Left cardiac atrium (tissue), 4 donors: ENCODE measurements at regions of chr12 and their contacts with region 1.

Region 1: GRCh38 chr12:25583545-25583944 is 30.5 kb upstream of the LMNTD1 start:
- DNase-seq: peak; percentile 41
- ATAC-seq: peak; percentile 92 to 96

Region 2: DNA sequence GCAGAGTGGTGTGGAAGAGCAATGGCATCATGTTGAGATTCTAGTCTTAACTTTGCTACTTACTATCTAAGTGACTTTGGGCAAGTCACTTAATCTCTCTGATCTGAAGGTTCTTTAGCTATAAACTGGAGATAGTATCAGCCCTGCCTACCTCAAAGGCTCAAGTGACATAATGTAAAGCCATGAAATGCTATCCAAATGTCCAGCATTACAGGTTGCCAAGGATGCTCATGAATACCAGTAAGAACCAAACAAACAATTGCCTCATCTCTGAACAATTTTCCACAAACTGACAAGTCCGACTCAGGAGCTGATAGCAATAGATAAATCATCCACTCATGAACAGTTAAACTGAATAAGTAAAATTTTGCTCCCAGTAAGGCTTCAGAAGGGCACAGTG is 82.0 kb before region 1 on chr12:
- intact Hi-C with region 1: no loop called
- DNase-seq: no peak
- ATAC-seq: no peak

Region 3: DNA sequence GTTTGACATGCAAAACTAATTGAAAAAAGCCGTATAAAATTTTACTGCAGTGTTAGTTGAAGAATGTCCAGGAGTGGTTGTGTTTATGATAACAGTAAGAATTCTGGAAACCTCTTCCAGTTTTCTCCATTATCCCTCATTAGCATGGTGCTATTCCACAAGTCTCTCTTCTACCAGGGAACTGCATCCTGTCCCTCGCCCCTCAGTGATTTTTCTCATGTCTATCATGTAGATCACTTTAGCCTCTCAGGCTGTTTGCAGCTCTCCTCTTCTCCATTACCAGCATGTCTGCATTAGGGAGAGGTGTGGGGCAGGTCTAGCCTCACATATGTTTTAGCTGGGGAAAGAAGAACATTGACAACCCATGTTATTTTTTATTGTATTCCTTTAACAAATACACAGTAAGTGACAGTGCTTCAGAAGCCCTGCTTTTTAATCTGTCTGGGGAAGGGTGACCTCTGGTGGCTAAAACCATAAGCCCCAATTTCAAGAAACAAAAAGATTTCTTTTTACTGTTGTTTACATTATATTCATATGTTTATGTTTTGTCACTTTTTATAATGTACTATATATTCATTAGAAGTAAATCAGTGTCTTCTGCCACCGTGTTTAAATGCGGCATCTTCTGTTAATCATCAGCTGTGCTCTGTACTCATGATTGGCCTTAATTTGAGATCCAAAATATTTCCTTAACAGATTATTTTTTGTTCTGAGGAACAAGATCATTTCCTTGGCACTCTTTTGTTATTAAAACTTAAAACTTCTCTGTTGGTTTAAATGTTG is 445.6 kb after region 1 on chr12:
- intact Hi-C with region 1: loop called (anchors 10 kb)
- DNase-seq: no peak
- ATAC-seq: peak; percentile 64 to 74